ENCODE measurements at regions of chr7 and their contacts with region 1.

Region 1: DNA sequence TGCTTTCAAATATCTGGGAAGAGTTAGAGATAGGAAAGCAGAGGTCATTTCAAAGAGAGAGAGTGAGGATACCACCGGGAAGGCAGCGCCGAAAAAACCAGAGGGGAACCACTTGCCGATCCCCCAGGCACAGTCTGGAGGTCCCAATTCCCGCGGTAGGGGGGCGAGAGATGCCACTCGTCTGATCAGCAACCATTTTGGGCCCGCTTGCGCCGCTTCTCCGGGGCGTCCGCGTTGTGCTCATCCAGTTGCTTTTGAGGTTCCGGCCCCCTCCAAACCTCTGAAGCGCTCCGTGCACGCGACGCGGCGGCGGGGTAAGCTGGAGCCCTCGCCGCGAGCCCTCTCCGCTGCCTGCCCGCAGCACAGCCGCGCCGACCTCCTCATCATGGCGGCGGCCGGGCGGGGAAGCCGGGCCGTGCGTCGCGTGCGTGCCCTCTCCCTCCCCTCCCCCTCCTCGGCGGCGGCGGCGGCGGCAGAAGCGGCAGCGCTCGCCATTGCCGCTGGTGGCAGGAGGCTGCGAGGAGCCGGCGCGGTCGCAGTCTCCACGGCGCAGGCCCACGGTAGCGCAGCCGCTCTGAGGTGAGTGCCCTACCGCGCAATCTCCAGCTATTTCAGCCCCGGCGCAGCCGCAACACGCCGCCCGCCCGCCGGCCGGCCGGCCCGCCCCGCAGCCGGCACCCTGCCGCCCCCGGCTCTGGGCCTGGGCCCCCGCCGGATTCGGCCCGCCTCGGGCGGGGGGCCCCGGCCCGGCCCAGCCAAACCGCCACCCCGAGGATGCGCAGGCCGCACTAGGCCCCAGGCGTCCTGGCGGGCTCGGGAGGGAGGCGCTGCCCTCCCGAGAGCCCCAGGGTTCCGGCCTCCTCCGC is at the start of gene NRF1:
- DNase-seq: peak; percentile 92
- H3K4me3 Mint-ChIP-seq: peak within 1 kb of the TSS; percentile 95
- H3K27ac Mint-ChIP-seq: peak within 1 kb of the TSS; percentile 97
- H3K4me1 Mint-ChIP-seq: peaks cover 53% of the 10 kb centered on the region
- H3K27me3 Mint-ChIP-seq: no peaks in the 10 kb centered on the region
- total RNA-seq, gene NRF1: 19.9 to 20.4 TPM

Region 2: GRCh38 chr7:129423700-129424618 is 187.5 kb before region 1 on chr7:
- CTCF ChIA-PET with region 1: no interaction called
- POLR2A ChIA-PET with region 1: no interaction called
- intact Hi-C with region 1: no loop called
- DNase-seq: no peak
- H3K4me3 Mint-ChIP-seq: no peak overlapping the region
- H3K27ac Mint-ChIP-seq: no peak overlapping the region
- H3K4me1 Mint-ChIP-seq: no peaks in the 10 kb centered on the region
- H3K27me3 Mint-ChIP-seq: no peaks in the 10 kb centered on the region

Region 3: DNA sequence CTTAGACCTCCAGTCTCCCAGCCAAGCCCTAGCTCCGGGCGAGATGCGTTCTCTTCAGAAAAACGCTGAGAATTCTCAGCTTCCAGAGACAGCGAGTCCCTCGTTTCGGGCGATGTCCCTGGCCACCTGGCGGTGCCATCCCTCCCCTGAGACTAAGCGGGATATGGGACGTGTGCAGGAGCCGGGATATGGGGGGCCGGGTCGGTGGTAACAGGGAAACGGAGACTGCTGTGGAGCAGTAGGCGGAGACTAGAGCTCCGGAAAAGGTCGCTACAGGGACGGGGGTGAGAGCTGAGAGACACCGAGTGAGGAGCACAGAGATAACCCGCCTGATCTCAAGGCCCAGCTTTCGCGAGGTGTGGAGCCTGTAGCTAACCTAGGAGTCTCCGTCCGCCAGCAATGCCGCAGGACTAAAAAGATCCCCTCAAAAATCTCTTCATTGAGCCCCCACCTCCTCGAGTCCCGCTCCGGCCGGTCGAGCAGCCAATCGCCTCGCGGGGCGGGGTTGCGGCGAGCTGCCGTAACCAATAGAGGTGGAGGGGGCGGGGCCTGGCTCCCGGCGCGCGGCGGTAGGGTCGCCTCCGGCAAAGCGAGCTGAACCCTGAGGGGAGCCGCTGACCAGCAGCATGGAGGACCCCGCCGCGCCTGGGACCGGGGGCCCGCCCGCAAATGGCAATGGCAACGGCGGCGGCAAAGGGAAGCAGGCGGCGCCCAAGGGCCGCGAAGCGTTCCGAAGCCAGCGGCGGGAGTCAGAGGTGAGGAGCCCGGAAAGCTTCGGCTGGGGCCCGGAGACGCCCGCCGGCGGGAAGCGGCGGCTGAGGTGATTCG is 177.4 kb before region 1 on chr7 and contains the start of gene STRIP2:
- CTCF ChIA-PET with region 1: interaction called, 10 read pairs
- POLR2A ChIA-PET with region 1: no interaction called
- intact Hi-C with region 1: no loop called
- DNase-seq: peak; percentile 95
- H3K4me3 Mint-ChIP-seq: peak within 1 kb of the TSS; percentile 86
- H3K27ac Mint-ChIP-seq: peak within 1 kb of the TSS; percentile 83
- H3K4me1 Mint-ChIP-seq: peaks cover 28% of the 10 kb centered on the region
- H3K27me3 Mint-ChIP-seq: peaks cover 6% of the 10 kb centered on the region
- total RNA-seq, gene STRIP2: 56.1 to 62.0 TPM

Region 4: DNA sequence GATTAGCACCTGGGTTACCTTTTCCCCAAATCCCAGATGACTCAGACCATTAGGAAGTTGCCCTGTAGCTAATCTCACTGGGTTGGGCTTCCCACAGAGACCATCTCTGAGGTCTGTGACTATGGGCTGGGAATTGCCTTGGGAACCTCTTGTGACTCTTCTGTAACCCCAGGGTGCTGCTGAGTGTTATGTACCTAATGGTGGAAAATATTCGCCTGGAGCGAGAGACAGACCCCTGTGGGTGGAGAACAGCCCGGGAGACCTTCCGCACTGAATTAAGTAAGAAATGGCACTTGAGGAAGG is 157.3 kb before region 1 on chr7:
- CTCF ChIA-PET with region 1: no interaction called
- POLR2A ChIA-PET with region 1: no interaction called
- intact Hi-C with region 1: no loop called
- DNase-seq: no peak
- H3K4me3 Mint-ChIP-seq: no peak overlapping the region
- H3K27ac Mint-ChIP-seq: no peak overlapping the region
- H3K4me1 Mint-ChIP-seq: peaks cover 2% of the 10 kb centered on the region
- H3K27me3 Mint-ChIP-seq: no peaks in the 10 kb centered on the region

Region 5: GRCh38 chr7:129512182-129512581 is 99.3 kb before region 1 on chr7:
- CTCF ChIA-PET with region 1: no interaction called
- POLR2A ChIA-PET with region 1: no interaction called
- intact Hi-C with region 1: no loop called
- DNase-seq: no peak
- H3K4me3 Mint-ChIP-seq: no peak overlapping the region
- H3K27ac Mint-ChIP-seq: no peak overlapping the region
- H3K4me1 Mint-ChIP-seq: no peaks in the 10 kb centered on the region
- H3K27me3 Mint-ChIP-seq: no peaks in the 10 kb centered on the region

Region 6: DNA sequence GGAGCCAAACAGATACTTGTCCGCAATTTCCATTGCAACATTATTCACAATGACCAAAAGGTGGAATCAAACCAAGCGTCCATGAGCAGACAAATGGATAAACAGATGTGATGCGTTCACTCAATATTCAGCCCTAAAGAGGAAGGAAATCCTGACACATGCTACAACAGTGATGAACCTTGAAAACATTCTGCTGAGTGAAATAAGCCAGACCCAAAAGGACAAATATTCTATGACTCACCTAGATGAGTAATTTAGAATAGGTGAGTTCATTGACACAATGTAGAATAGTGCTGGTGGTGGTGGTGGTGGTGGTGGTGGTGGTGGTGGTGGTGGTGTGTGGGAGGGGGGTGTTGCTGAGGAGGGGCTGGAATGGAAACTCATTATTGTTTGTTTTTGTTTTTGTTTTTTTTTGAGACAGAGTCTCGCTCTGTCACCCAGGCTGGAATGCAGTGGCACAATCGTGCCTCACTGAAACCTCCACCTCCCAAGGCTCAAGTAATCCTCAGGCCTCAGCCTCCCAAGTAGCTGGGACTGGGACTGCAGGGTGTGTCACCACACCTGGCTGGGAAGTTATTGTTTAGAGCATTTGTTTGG is 80.6 kb before region 1 on chr7:
- CTCF ChIA-PET with region 1: interaction called, 3 read pairs
- POLR2A ChIA-PET with region 1: no interaction called
- intact Hi-C with region 1: loop called (anchors 1 kb)
- DNase-seq: peak; percentile 86
- H3K4me3 Mint-ChIP-seq: no peak overlapping the region
- H3K27ac Mint-ChIP-seq: peak overlapping the region; percentile 19
- H3K4me1 Mint-ChIP-seq: peaks cover 9% of the 10 kb centered on the region
- H3K27me3 Mint-ChIP-seq: peaks cover 11% of the 10 kb centered on the region

Region 7: DNA sequence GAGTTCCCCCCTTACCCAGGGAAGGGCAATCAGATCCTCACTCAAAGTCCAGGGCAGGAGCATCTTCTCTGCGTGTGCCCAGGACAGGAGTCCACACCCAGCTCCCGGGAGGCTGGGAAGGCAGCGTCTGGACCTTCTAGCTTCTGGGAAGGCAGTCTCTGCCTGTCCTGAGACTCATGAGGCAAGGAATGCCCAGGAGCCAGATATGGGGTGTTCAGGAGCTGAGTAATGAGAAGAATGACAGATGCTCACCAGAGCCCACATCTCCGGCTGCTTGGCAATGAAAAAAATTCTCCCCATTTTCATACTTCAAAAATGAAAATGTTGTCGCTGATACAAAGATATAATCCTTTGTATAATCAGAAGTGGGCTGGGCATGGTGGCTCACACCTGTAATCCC is 67.7 kb before region 1 on chr7:
- CTCF ChIA-PET with region 1: no interaction called
- POLR2A ChIA-PET with region 1: no interaction called
- intact Hi-C with region 1: no loop called
- DNase-seq: no peak
- H3K4me3 Mint-ChIP-seq: no peak overlapping the region
- H3K27ac Mint-ChIP-seq: no peak overlapping the region
- H3K4me1 Mint-ChIP-seq: peaks cover 3% of the 10 kb centered on the region
- H3K27me3 Mint-ChIP-seq: peaks cover 11% of the 10 kb centered on the region

Region 8: DNA sequence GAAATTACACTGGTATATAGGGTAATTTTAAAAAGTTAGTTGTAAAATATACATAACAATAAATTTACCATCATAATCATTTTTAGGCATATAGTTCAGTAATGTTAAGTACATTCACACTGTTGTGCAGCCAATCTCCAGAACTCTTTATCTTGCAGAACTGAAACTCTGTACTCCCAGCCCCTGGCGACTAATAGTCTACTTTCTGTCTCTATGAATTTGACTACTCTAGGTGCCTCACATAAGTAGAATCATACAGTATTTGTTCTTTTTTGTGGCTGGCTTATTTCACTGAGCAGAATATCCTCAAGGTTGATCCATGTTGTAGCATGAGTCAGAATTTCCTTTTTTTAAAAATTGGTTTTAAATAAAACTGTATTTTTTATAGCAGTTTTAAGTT is 41.4 kb after region 1 on chr7:
- CTCF ChIA-PET with region 1: interaction called, 3 read pairs
- POLR2A ChIA-PET with region 1: no interaction called
- intact Hi-C with region 1: loop called (anchors 5 kb)
- DNase-seq: peak; percentile 25
- H3K4me3 Mint-ChIP-seq: no peak overlapping the region
- H3K27ac Mint-ChIP-seq: no peak overlapping the region
- H3K4me1 Mint-ChIP-seq: peaks cover 35% of the 10 kb centered on the region
- H3K27me3 Mint-ChIP-seq: no peaks in the 10 kb centered on the region

Region 9: DNA sequence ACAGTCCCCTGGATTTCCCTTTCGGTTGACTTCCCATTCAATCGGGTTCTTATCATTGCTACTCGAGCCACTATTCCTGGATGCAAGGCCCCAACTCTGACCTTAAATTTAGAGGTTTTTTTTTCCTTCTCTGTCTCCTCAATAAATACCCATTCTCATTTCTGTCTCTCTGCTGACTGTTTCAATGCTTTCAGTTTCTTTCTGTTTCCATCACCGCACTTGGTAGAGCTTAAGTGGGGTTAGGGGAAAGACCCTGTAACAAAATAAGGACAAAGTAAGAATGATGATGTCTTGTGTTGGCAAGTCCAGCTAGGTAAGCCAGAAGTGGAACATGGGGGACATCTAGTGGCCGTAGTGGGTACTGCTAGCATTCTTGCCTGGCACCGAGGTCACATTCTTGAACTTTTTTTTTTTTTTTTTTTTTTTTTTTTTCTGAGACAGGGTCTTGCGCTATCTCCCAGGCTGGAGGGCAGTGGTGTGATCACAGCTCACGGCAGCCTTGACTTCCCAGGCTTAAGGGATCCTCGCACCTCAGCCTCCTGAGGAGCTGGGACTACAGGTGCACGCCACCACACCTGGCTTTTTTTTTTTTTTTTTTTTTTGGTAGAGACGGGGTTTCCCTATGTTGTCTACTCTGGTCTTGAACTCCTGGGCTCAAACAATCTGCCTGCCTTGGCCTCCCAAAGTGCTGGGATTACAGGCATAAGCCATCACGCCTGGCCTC is 399.4 kb after region 1 on chr7:
- CTCF ChIA-PET with region 1: no interaction called
- POLR2A ChIA-PET with region 1: no interaction called
- intact Hi-C with region 1: loop called (anchors 2 kb)
- DNase-seq: peak; percentile 94
- H3K4me3 Mint-ChIP-seq: no peak overlapping the region
- H3K27ac Mint-ChIP-seq: peak overlapping the region; percentile 70
- H3K4me1 Mint-ChIP-seq: peaks cover 12% of the 10 kb centered on the region
- H3K27me3 Mint-ChIP-seq: no peaks in the 10 kb centered on the region